GM12878 (cell line): ENCODE measurements at regions of chr18 and their contacts with region 1.

Region 1: GRCh38 chr18:59459369-59460079 is 100.5 kb upstream of the LMAN1 start:
- DNase-seq: no peak
- ATAC-seq: peak; percentile 48; the same call in 2 of the 3 replicates
- H3K4me3 ChIP-seq: no peak overlapping the region
- H3K27ac ChIP-seq: no peak overlapping the region
- H3K4me1 ChIP-seq: no peaks in the 10 kb centered on the region
- H3K27me3 ChIP-seq: peaks cover 4 to 9% of the 10 kb centered on the region in 2 experiments; a peak in 3 of 4 replicates
- CTCF ChIP-seq: peak; percentile 53 to 58 (median 55)
- EP300 ChIP-seq: no peak
- POLR2A ChIP-seq: no peak
- RAD21 ChIP-seq: peak; percentile 66

Region 2: DNA sequence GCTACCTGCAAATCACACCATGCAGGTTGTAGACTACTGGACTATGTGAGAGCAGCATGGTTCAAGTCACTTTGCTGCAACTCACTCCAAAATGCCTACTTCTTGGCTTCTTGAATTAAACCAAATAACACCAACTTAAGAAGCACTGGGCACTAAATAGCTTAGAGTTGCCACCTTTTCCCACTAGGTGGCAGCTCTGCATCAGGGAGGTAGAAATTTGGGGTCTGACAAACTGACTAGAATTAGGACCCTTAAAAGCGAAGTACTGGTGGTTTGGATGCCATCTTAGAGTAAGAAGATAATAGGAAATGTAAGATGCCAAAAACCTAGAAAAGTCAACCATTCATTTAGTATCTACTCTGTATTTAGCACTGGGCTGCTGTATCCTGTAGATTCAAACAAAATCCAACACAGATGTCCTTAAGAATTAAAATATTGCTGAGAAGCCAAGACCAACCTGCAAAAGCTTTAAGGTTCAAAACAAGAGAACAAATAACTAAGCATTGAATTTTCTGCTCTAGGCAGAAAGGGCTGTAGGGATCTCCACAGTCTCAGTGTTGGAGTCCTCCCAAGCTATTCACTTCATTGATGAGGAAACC is 172.2 kb after region 1 on chr18:
- CTCF ChIA-PET with region 1: interaction called, 16 read pairs
- POLR2A ChIA-PET with region 1: no interaction called
- RAD21 ChIA-PET with region 1: interaction called, 3 read pairs
- SMC1A ChIA-PET with region 1: no interaction called
- in situ Hi-C with region 1: no loop called
- intact Hi-C with region 1: no loop called
- DNase-seq: no peak
- ATAC-seq: peak; percentile 66
- H3K4me3 ChIP-seq: no peak overlapping the region
- H3K27ac ChIP-seq: no peak overlapping the region
- H3K4me1 ChIP-seq: no peaks in the 10 kb centered on the region
- H3K27me3 ChIP-seq: no peaks in the 10 kb centered on the region; a peak in 3 of 4 replicates
- CTCF ChIP-seq: peak; percentile 53 to 65 (median 61)
- EP300 ChIP-seq: no peak
- POLR2A ChIP-seq: no peak
- RAD21 ChIP-seq: peak; percentile 52

Region 3: DNA sequence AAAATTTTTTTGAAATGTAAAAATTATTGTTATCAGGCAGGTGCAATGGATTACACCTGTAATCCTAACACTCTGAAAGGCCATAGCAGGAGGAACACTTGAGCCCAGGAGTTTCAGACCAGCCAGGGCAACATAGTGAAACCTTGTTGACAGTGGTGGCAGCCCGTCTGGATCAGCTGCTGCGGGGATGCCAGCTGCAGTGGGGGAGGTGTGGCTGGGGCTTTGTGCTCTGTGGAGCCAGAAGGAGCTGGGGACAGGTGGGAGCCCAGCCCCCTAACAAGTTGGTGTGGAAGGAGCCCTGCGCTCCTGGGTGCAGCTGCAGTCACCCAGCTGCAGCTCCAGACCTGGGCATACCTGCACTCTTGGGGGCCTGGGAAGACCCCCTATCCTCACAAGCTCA is 1095.4 kb after region 1 on chr18:
- CTCF ChIA-PET with region 1: interaction called, 14 read pairs
- POLR2A ChIA-PET with region 1: no interaction called
- RAD21 ChIA-PET with region 1: no interaction called
- SMC1A ChIA-PET with region 1: no interaction called
- in situ Hi-C with region 1: loop called (anchors 25 kb)
- intact Hi-C with region 1: no loop called
- DNase-seq: no peak
- ATAC-seq: no peak; the same call in 2 of the 3 replicates
- H3K4me3 ChIP-seq: no peak overlapping the region
- H3K27ac ChIP-seq: no peak overlapping the region
- H3K4me1 ChIP-seq: no peaks in the 10 kb centered on the region
- H3K27me3 ChIP-seq: no peaks in the 10 kb centered on the region
- CTCF ChIP-seq: no peak
- EP300 ChIP-seq: no peak
- POLR2A ChIP-seq: no peak
- RAD21 ChIP-seq: no peak